ENCODE measurements at regions of chr3 and their contacts with region 1.

Region 1: GRCh38 chr3:176692966-176693785 is 504.1 kb downstream of the TBL1XR1 start:
- DNase-seq: no peak
- H3K4me3 ChIP-seq: no peak overlapping the region
- CTCF ChIP-seq: no peak

Region 2: GRCh38 chr3:176633511-176633910 is 59.7 kb before region 1 on chr3:
- in situ Hi-C with region 1: loop called (anchors 5 kb)
- DNase-seq: no peak
- H3K4me3 ChIP-seq: no peak overlapping the region
- CTCF ChIP-seq: no peak

Measured in astrocyte of the cerebellum (primary cell).